ENCODE measurements at regions of chr12 and their contacts with region 1.

Region 1: GRCh38 chr12:70576346-70577282 is 60.6 kb downstream of the PTPRB start:
- DNase-seq: peak; percentile 7
- ATAC-seq: peak; percentile 88
- H3K4me3 ChIP-seq: no peak overlapping the region
- H3K27ac ChIP-seq: no peak overlapping the region
- H3K4me1 ChIP-seq: no peaks in the 10 kb centered on the region
- H3K27me3 ChIP-seq: no peaks in the 10 kb centered on the region
- CTCF ChIP-seq: peak; percentile 61 to 81 (median 73)
- EP300 ChIP-seq: no peak
- POLR2A ChIP-seq: no peak
- RAD21 ChIP-seq: peak; percentile 98

Region 2: DNA sequence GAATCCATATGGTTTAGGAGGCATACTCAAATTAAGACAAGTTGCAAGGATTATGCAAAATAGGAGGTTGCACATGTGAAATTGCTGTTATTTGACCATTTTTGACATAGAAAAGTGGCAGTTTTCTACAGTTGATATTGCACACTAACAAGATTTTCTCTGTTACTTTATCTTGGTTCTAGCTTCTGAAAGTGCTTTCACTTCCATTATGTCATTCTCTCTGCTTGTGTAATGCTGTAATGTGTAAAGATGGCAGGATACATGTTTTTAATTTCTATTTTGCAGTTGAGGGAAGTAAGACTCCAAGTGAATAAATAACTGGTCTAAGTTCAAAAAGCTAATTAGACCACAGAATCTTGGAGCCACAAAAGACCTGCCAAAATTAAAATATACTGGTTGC is 691.0 kb before region 1 on chr12:
- CTCF ChIA-PET with region 1: interaction called, 32 read pairs
- POLR2A ChIA-PET with region 1: no interaction called
- RAD21 ChIA-PET with region 1: interaction called, 21 read pairs
- SMC1A ChIA-PET with region 1: interaction called, 7 read pairs
- in situ Hi-C with region 1: no loop called
- intact Hi-C with region 1: no loop called
- DNase-seq: no peak
- ATAC-seq: peak; percentile 86
- H3K4me3 ChIP-seq: no peak overlapping the region
- H3K27ac ChIP-seq: no peak overlapping the region
- H3K4me1 ChIP-seq: no peaks in the 10 kb centered on the region; the same call in 1 of the 2 replicates
- H3K27me3 ChIP-seq: no peaks in the 10 kb centered on the region
- CTCF ChIP-seq: no peak
- EP300 ChIP-seq: no peak
- POLR2A ChIP-seq: no peak
- RAD21 ChIP-seq: no peak

Region 3: DNA sequence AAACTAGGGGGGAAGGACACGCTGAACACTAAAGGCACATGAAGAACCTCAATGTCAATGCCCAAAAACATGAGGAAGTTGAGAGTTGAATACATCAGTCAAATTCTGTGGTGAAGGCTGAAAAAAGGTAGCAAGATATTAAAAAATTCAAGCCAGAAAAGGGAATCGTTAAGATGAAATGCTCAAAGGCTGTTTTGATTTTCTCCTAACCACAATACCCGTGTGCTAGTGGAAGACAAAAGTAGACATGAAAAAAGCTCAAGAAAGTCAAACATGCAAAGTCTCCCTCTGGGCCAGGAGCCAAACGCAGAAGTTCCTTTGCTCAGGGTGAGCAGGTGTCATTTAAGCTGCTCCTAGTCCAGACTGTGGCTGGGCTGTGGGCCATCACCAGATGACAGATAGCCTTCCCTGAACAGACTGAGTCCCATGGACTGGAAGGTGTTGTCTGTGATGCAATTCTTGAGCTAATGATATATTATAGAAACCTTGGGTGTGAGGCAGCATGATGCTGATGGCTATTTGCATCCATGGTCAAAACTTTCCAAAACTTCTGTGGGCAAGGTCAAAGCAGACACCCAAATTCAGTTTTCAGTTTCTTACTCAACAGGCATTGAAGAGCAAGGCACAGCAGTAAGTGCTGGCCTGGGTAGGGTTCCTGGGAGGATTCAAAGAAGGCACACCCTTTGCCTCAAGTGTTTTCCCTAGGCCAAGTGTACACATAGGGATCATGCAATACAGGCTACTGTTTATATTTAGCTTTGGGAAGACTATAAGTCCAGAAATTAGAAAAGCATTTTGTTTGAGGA is 670.0 kb before region 1 on chr12:
- CTCF ChIA-PET with region 1: interaction called, 80 read pairs
- POLR2A ChIA-PET with region 1: no interaction called
- RAD21 ChIA-PET with region 1: interaction called, 34 read pairs
- SMC1A ChIA-PET with region 1: interaction called, 44 read pairs
- in situ Hi-C with region 1: no loop called
- intact Hi-C with region 1: no loop called
- DNase-seq: peak; percentile 75
- ATAC-seq: peak; percentile 89
- H3K4me3 ChIP-seq: no peak overlapping the region
- H3K27ac ChIP-seq: peak overlapping the region; percentile 14
- H3K4me1 ChIP-seq: peaks cover 16% of the 10 kb centered on the region
- H3K27me3 ChIP-seq: no peaks in the 10 kb centered on the region
- CTCF ChIP-seq: no peak
- EP300 ChIP-seq: no peak
- POLR2A ChIP-seq: no peak
- RAD21 ChIP-seq: no peak

Region 4: DNA sequence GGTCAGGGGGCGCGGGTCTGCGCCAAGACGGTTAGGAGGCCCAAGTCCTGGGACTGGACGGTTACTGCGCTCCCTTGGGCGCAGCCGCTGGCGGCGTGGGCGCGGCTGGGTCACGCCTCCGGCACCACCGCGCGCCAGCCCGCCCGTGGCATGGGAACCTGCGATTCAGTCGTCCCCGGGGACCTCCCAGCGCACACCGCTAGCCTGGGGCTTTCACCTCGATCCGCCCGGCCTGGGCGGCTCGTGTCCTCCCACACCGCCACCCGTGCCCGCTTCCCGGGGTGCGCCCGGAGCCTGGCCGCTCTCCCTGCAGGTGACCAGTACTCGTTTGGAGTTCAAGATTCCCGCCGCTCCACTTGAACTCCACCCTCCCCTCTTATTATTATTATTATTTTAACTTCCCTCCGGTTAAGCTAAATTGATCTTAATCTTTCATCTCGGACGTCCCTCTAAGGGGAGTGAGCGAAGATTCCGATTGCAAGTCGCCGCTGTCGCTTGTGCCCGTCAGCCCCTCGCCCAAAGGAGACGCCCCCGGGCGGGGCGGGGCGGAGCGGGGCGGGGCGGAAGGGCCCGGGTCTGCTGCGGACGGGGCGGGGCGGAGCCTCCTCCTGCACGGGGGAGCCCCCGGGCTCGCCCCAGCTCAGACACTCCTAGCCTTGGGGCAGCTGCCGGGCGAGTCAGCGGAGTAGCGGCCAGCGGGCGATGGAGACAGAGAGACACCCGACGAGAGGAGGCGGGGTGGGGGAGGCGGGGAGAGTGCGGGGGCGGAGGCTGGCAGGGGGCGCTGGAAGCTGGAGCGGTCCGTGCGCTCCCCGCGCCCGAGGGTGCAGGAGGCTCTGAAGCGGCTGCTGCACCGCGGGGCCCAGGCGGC is 210.7 kb before region 1 on chr12 and contains the start of gene KCNMB4:
- CTCF ChIA-PET with region 1: interaction called, 4 read pairs
- POLR2A ChIA-PET with region 1: no interaction called
- RAD21 ChIA-PET with region 1: interaction called, 4 read pairs
- SMC1A ChIA-PET with region 1: no interaction called
- in situ Hi-C with region 1: no loop called
- intact Hi-C with region 1: loop called (anchors 1 kb)
- DNase-seq: peak; percentile 7
- ATAC-seq: peak; percentile 91
- H3K4me3 ChIP-seq: peak within 1 kb of the TSS; percentile 73
- H3K27ac ChIP-seq: no peak within 1 kb of the TSS
- H3K4me1 ChIP-seq: peaks cover 15% of the 10 kb centered on the region
- H3K27me3 ChIP-seq: peaks cover 5 to 18% of the 10 kb centered on the region in 2 experiments
- CTCF ChIP-seq: no peak
- EP300 ChIP-seq: no peak
- POLR2A ChIP-seq: 0 out of 2 replicates have a peak, but pooled peaks have one; percentile 35
- RAD21 ChIP-seq: no peak
- polyA plus RNA-seq, gene KCNMB4: 0.06 to 0.20 TPM

Region 5: DNA sequence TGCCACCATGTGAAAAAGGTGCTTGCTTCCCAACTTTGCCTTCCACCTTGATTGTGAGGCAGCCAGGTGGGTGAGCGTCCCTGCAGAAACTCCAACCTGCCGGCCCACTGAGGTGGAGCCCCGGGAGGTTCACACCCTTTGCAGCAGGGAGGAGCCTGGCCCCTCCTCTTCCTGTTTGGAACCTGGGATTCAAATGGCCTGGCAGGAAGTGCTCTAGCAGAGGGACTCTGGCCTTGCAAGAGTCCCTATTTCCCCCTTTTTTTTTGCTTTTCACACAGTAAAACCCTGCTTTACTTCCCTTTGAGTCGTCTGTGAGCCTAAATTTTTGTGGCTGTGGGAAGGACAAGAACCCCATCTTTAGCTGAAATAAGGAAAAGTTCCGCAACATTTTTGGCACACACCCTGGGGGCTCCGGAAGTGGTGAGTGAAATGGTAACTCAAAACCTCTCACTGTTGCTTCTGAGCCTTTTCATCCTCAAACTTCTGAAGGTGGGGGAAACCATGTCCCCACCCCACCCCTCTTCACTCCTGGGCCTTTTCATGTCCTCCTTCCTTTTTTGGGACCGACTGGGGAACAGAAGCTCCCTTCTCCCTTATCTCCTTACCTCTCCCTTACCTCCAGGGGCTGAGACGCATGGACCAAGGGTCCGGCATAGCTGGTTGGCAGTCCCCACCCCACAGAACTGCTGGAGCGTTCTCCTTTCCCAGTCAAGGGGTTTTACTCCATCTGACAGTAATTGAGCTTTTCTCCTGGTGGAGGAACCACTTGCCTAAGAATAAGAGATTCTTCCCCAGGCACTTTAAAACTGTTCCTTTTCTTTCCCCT is 108.5 kb before region 1 on chr12:
- CTCF ChIA-PET with region 1: interaction called, 5 read pairs
- POLR2A ChIA-PET with region 1: no interaction called
- RAD21 ChIA-PET with region 1: interaction called, 6 read pairs
- SMC1A ChIA-PET with region 1: interaction called, 12 read pairs
- in situ Hi-C with region 1: no loop called
- intact Hi-C with region 1: no loop called
- DNase-seq: no peak
- ATAC-seq: peak; percentile 88
- H3K4me3 ChIP-seq: peak overlapping the region; percentile 68
- H3K27ac ChIP-seq: peak overlapping the region; percentile 33
- H3K4me1 ChIP-seq: no peaks in the 10 kb centered on the region
- H3K27me3 ChIP-seq: no peaks in the 10 kb centered on the region
- CTCF ChIP-seq: no peak
- EP300 ChIP-seq: no peak
- POLR2A ChIP-seq: no peak
- RAD21 ChIP-seq: no peak

Region 6: DNA sequence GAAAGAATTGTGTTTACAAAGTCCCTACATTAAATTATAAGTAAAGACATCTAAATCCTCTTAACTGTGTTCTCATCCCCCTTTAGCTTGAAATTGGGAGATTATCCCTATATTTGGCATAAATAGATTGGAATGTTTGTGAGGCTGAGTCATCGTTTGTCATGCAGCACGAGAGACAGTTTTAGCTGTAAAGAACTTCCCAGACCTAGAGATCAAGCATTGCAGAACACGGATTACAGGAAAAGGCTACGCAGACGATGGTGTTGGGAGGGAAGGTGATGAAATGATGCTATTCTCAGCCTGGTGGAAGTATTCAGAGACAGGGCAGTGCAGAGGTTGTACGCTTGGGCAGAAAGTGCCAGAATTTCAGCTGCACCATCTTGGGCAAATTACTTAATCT is 33.2 kb before region 1 on chr12:
- CTCF ChIA-PET with region 1: no interaction called
- POLR2A ChIA-PET with region 1: no interaction called
- RAD21 ChIA-PET with region 1: no interaction called
- SMC1A ChIA-PET with region 1: no interaction called
- in situ Hi-C with region 1: no loop called
- intact Hi-C with region 1: no loop called
- DNase-seq: no peak
- ATAC-seq: no peak
- H3K4me3 ChIP-seq: no peak overlapping the region
- H3K27ac ChIP-seq: no peak overlapping the region
- H3K4me1 ChIP-seq: no peaks in the 10 kb centered on the region
- H3K27me3 ChIP-seq: no peaks in the 10 kb centered on the region
- CTCF ChIP-seq: no peak
- EP300 ChIP-seq: no peak
- POLR2A ChIP-seq: no peak
- RAD21 ChIP-seq: no peak